Posterior vena cava (tissue), 2 donors: ENCODE measurements at regions of chr2 and their contacts with region 1.

Region 1: DNA sequence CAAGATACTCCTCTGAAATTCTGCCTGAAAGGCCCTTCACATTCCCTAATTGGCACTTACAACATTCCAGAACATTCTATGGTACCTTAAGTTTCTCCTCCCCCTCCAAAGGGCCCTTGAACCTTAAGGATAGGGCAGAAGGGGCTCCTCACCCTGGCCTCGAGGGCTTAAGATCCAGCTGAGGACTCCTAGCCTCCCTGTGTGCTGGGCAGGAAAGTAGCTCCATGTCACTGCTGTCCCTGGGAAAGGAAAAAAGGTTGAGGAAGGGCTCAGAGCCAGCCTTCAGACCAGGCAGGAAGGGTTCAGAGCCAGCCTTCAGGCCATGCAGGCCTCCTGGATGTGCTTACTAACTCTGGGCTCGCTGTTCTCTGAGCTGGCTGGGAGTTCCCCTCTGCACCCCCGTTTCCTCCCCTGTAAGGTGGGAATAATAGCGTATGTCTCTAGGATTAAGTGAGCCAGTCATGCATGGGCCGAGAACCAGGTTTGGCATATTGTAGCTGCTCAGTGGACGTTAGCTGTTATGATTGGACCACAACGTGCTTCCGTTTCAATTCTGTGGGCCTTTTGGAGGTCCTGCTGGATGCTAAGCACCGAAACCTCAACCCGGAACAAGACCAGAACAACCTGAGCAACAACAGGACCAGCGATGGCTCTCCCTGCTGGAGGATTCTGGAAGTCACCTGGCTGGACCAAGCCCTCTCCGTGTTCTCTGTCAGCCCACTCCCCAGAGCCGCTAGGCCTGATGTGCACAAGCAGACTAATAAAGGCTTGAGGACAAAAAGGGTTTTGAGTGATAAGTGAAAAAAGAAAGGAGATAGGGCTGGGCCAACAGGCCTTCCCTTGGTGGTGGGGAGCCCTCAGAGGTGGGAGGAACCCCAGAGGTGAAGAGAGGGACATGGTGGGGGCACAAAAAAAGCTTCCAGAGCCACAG is 1.0 kb upstream of the B3GNT7 start:
- DNase-seq: no peak

Region 2: DNA sequence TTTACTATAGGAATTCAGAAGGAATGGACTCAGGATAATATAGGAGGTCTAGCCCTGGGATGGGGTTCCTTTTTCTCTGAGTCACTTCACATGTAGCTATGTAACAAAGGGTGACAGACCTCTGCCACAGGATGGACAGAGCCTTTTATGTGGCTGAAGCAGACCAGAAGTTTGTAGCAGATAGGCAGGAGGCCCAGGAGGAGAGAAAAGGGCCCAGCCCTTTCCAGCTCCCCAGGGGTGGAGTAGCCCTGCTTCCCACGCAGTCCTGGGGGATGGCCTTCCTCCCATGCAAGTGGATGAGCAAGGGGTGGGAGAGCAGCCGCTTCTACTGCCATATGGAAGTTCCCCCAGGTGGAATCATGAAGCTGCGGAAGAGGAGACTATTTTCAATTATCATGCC is 155.8 kb before region 1 on chr2:
- intact Hi-C with region 1: loop called in 1 of 2 experiments (anchors 10 kb)
- DNase-seq: no peak